ENCODE measurements at regions of chr17 and their contacts with region 1.

Region 1: DNA sequence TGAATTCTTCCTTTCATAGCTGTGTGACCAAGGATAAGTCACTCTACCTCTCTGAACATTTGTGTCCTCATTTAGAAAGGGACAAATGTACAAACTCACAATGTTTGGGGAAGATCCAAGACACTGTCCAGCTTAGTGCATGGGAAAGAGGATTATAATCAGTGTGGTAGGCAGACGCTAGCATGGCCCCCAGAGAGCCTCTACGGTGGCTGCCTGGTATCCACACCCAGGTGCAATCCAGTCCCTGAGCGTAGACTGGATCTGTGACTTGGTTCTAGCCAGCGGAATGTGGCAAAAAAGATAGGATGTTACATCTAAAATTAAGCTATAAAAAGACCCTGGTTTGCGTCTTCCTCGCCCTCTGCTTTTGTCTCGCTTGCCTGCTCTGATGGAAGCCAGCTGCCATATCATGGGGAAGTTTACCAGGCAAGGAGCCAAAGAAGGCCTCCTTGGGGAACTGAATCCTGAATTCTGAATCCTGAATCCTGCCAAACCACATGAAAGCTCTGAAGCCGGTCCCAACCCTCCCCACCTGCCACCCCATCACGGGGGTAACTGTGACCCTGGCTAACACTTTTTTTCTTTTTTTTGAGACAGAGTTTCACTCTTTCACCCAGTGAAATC is 51.7 kb downstream of the PLXDC1 start:
- DNase-seq: no peak
- ATAC-seq: no peak
- H3K4me3 Mint-ChIP-seq: no peak overlapping the region
- H3K27ac Mint-ChIP-seq: no peak overlapping the region
- H3K4me1 Mint-ChIP-seq: peaks cover 60% of the 10 kb centered on the region
- H3K27me3 Mint-ChIP-seq: no peaks in the 10 kb centered on the region

Region 2: DNA sequence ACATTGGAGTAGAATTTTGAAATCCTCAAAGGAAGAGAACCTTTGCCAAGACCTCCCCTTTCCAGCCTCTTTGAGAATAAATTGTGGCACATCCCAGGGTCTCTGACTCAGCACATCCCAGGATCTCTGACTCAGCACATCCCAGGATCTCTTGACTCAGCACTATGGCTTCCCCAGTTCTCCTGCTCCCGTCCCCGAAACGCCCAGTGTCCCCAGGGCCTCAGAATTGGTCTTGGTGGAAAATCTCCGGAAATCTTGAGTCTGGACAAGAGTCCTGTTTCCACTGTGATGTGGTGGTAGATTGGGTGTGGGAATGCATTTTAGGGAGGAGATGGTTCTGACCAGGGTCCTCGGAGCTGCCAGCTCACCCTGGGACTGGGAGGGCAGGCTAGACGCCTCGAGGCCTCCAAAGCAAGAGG is 32.4 kb after region 1 on chr17:
- CTCF ChIA-PET with region 1: no interaction called
- POLR2A ChIA-PET with region 1: interaction called, 10 read pairs
- intact Hi-C with region 1: no loop called
- DNase-seq: no peak
- ATAC-seq: no peak
- H3K4me3 Mint-ChIP-seq: no peak overlapping the region
- H3K27ac Mint-ChIP-seq: no peak overlapping the region
- H3K4me1 Mint-ChIP-seq: peaks cover 2% of the 10 kb centered on the region
- H3K27me3 Mint-ChIP-seq: no peaks in the 10 kb centered on the region